Activated CD4-positive, alpha-beta memory T cell treated with anti-CD3 and anti-CD28 coated beads for 36 hours (primary cell): ENCODE measurements at regions of chr2 and their contacts with region 1.

Region 1: DNA sequence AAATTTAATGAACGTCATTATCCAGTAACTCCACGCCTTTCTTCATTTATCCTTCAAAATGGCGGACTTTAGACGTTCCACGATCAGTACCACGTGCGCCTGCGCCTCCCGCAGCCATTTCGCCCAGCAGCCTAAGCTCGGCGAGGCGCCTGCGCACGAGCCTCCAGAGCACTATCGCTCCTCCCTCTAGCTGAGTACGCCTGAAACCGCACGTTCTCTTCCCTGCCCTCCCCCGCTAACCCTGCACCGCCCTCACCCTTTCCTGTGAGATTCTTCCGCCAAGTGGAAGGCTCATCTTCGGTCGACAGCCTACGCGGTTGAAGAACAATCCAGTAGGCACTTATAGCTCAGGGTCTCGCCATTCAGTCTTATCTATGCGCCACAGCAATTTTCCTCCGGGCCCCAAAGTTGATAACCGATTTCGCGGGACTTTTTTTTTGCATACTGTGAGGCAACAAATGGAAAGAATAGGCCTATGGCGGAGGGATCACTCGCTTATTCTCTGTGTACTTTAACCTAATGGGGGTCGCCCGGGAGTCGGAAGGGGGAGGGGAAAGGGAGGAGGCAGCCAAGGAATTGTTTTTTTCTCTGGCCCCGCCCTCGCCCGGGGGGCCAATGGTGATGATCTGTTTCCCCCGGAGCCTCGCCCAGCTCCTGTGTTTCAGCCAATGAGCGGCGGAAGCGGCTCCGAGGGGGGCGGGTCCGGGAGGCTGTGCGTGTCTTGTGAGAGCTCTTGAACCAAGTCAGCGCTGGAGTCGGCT is at the start of gene KDM3A:
- DNase-seq: peak; percentile 100
- H3K4me3 Mint-ChIP-seq: peak within 1 kb of the TSS; percentile 94
- H3K27ac Mint-ChIP-seq: peak within 1 kb of the TSS; percentile 100
- H3K4me1 Mint-ChIP-seq: peaks cover 37% of the 10 kb centered on the region
- H3K27me3 Mint-ChIP-seq: no peaks in the 10 kb centered on the region
- total RNA-seq, gene KDM3A: 55.6 to 64.9 TPM

Region 2: GRCh38 chr2:85611705-85612587 is 828.9 kb before region 1 on chr2 and contains the start of gene C2orf68:
- CTCF ChIA-PET with region 1: no interaction called
- POLR2A ChIA-PET with region 1: no interaction called
- intact Hi-C with region 1: loop called (anchors 10 kb)
- DNase-seq: peak; percentile 94
- H3K4me3 Mint-ChIP-seq: peak within 1 kb of the TSS; percentile 95
- H3K27ac Mint-ChIP-seq: peak within 1 kb of the TSS; percentile 91
- H3K4me1 Mint-ChIP-seq: peaks cover 29% of the 10 kb centered on the region
- H3K27me3 Mint-ChIP-seq: no peaks in the 10 kb centered on the region
- total RNA-seq, gene C2orf68: 36.3 to 39.1 TPM

Region 3: GRCh38 chr2:86195055-86195807 is 245.6 kb before region 1 on chr2 and contains the start of gene IMMT:
- CTCF ChIA-PET with region 1: no interaction called
- POLR2A ChIA-PET with region 1: interaction called, 7 read pairs
- intact Hi-C with region 1: loop called (anchors 1 kb)
- DNase-seq: peak; percentile 96
- H3K4me3 Mint-ChIP-seq: peak within 1 kb of the TSS; percentile 91
- H3K27ac Mint-ChIP-seq: peak within 1 kb of the TSS; percentile 88
- H3K4me1 Mint-ChIP-seq: peaks cover 39% of the 10 kb centered on the region
- H3K27me3 Mint-ChIP-seq: no peaks in the 10 kb centered on the region
- total RNA-seq, gene IMMT: 170 to 172 TPM

Region 4: DNA sequence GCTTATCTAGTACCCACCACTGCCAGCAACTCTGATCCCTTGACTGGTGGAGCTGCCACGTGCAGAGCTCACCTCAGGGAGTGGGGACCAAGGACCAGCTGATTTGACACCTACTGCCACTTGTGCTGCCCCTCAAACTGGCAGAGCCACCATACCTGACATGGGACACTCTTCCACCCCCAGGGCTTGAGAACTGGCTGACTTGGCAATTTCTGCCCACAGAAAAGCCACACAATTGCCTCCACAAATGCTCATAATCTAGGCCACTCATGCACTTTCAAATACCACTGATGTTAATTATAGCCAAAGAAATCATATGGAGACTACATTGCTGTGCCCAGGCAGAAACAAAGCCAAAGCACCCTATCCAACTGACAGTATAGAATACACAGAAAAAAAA is 11.5 kb before region 1 on chr2:
- CTCF ChIA-PET with region 1: no interaction called
- POLR2A ChIA-PET with region 1: no interaction called
- intact Hi-C with region 1: no loop called
- DNase-seq: no peak
- H3K4me3 Mint-ChIP-seq: no peak overlapping the region
- H3K27ac Mint-ChIP-seq: no peak overlapping the region
- H3K4me1 Mint-ChIP-seq: no peaks in the 10 kb centered on the region
- H3K27me3 Mint-ChIP-seq: peaks cover 5% of the 10 kb centered on the region

Region 5: DNA sequence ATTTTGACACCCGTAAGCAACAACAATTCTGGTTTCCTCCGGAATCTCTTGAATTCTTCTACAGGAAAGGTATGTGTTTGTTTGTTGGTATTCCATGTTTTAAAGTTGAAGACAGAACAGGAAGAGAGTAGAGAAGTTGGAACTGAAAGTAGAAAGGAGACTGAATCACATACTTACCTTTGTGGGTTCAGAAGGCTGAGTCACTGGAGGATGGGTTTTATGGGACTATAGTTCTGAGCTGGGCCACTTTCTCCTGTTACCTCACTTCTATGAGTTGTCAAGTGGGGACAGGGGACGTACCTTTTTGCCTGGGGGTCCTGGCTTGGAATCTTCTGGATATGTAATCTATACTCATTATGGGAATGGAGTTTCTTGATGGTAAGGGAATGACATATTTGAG is 41.2 kb after region 1 on chr2:
- CTCF ChIA-PET with region 1: interaction called, 3 read pairs
- POLR2A ChIA-PET with region 1: interaction called, 3 read pairs
- intact Hi-C with region 1: loop called (anchors 1 kb)
- DNase-seq: peak; percentile 35
- H3K4me3 Mint-ChIP-seq: no peak overlapping the region
- H3K27ac Mint-ChIP-seq: peak overlapping the region; percentile 16
- H3K4me1 Mint-ChIP-seq: peaks cover 48% of the 10 kb centered on the region
- H3K27me3 Mint-ChIP-seq: no peaks in the 10 kb centered on the region

Region 6: GRCh38 chr2:86512034-86512433 is 71.2 kb after region 1 on chr2:
- CTCF ChIA-PET with region 1: no interaction called
- POLR2A ChIA-PET with region 1: no interaction called
- intact Hi-C with region 1: no loop called
- DNase-seq: no peak
- H3K4me3 Mint-ChIP-seq: no peak overlapping the region
- H3K27ac Mint-ChIP-seq: no peak overlapping the region
- H3K4me1 Mint-ChIP-seq: no peaks in the 10 kb centered on the region
- H3K27me3 Mint-ChIP-seq: no peaks in the 10 kb centered on the region

Region 7: GRCh38 chr2:86584151-86584913 is 143.5 kb after region 1 on chr2:
- CTCF ChIA-PET with region 1: no interaction called
- POLR2A ChIA-PET with region 1: interaction called, 6 read pairs
- intact Hi-C with region 1: loop called (anchors 5 kb)
- DNase-seq: peak; percentile 31
- H3K4me3 Mint-ChIP-seq: no peak overlapping the region
- H3K27ac Mint-ChIP-seq: peak overlapping the region; percentile 88
- H3K4me1 Mint-ChIP-seq: peaks cover 17% of the 10 kb centered on the region
- H3K27me3 Mint-ChIP-seq: no peaks in the 10 kb centered on the region